ENCODE measurements at regions of chr17 and their contacts with region 1.

Region 1: DNA sequence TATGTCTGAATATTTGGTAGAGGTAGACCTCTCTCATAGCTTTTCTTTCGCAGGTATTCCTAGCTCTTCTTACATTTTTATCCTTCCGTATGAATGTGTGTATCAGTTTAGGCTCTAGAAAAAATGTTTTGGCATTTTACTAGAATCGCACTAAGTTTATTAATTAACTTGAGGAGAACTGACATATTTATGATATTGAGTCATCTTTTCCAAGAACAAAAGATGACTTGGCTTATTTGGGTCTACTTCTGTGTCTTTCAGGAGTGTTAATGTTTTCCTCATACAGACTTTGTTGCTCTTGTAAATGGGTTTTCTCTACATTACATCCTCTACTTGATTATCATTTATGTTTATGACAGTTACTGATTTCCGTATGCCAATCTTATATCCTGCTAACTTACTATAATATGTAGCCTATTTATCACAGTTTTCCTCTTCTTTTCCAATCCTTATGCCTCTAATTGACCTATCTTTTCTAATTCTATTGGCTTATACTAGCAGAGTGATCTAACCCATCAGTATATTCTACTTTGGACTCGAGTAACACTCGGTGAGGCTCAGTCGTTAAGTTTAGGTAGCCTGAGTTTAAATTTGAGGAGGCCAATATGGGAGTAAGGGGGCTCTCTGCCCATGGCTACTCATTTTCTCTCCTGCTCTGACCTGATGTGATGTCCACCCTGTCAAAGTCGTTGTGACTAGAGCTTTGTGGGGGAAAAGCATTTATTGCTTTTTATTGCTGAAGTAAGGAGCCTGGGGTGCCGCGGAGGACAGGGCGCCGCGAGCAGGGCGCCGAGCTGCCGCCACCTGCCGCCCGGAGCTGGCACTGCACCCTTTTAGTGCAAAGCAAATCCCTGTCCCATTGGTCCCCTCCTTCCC is 20.0 kb downstream of the ST6GALNAC1 start:
- H3K4me3 ChIP-seq: peak overlapping the region; percentile 21
- H3K27ac ChIP-seq: no peak overlapping the region
- H3K4me1 ChIP-seq: no peaks in the 10 kb centered on the region
- CTCF ChIP-seq: peak; percentile 82

Region 2: DNA sequence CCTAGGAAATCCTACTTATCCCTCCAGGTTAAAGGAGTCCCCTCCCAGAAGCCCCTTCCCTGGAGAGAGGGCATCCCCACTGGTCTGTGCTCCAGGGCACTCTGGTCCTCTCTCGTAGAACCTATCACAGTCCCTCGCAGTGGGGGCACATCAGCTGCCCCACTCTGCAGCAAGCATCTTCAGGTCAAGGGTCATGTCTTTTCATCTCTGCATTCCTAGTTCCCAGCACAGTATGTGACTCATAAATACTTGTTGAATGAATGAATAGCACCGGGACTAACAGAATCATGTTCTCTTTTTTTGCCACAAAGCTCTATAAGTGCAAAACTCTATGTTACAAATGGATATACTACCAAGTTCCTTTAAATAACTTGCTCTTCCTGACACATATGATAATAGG is 419.2 kb before region 1 on chr17:
- CTCF ChIA-PET with region 1: no interaction called
- POLR2A ChIA-PET with region 1: no interaction called
- H3K4me3 ChIP-seq: no peak overlapping the region
- H3K27ac ChIP-seq: no peak overlapping the region
- H3K4me1 ChIP-seq: no peaks in the 10 kb centered on the region
- CTCF ChIP-seq: no peak

Region 3: DNA sequence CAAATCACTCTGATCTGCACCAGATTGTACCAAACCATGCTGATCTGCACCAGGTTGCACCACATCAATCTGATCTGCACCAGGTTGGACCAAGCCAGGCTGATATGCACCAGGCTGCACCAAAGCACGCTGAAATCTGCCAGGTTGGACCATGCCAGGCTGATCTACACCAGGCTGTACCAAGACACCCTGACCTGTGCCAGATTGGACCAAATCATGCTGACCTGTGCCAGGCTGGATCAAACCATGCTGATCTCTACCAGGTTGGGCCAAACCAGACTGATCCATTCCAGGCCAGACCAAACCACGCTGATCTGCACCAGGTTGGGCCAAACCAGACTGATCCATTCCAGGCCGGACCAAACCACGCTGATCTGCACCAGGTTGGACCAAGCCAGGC is 330.9 kb before region 1 on chr17:
- CTCF ChIA-PET with region 1: no interaction called
- POLR2A ChIA-PET with region 1: no interaction called
- H3K4me3 ChIP-seq: no peak overlapping the region
- H3K27ac ChIP-seq: no peak overlapping the region
- H3K4me1 ChIP-seq: no peaks in the 10 kb centered on the region
- CTCF ChIP-seq: no peak

Region 4: DNA sequence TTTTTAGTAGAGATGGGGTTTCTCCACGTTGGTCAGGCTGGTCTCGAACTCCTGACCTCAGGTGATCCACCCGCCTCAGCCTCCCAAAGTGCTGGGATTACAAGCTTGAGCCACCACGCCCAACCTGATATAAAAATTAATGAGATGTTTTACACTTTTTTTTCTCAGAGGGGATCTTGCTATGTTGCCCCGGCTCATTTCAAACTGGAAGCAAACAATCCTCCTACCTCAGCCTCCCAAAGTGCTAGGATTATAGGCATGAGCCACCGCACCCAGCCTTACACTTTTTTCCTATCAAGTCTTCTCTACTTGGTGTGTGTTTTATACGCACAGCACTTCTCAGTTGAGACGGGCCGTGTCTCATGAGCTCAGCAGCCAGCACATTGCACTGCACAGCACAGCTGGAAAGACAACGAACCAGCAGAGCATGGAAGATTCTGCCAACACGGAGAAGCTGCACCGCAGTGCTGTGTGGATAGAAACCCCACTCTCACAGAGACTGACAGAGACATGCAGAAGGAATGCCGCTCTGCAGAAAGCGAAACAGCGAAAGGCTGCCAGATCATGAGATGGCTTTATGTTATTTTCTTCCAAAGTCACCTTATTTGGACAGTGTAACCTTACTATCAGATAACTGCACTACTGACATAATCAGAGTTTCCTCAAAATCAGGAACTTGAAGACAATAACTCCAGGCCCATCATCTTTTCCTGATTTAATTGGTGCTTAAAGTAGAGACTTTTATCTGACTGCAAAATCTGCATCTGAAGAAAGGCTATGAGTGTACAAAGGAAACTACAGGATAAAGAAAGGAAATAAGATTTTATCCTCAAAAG is 308.9 kb before region 1 on chr17:
- CTCF ChIA-PET with region 1: no interaction called
- POLR2A ChIA-PET with region 1: no interaction called
- H3K4me3 ChIP-seq: no peak overlapping the region
- H3K27ac ChIP-seq: no peak overlapping the region
- H3K4me1 ChIP-seq: no peaks in the 10 kb centered on the region
- CTCF ChIP-seq: no peak

Region 5: DNA sequence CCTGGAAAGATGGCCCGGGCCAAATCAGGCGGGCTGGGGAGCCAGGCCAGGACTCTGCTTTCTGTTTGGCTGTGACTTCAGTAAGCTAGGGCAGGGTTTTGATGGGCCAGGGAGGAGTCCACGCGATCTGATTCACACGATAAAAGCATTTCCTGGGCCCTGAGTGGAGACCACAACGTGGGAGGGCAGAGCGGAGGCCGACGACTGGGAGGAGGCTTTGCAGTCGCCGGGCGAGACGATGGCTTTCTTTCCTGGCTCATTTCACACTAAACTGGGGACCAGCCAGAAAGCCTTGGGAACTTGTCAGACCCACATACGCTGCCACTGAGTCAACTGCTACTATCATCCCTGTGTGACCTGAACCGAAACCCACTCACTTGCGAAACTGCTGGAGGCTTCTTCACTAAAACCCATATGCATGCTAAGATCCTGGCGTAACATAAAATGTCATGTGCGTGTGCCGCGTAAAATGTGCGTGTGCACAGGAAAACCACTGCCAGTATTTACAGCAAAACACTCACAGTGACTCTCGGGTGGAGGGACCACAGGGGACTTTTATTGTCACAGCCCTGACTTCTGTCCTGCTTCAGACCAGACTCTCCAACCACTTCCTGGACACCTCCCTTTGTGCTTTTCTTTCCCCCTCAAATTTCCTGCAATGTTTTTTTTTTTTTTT is 108.1 kb before region 1 on chr17:
- CTCF ChIA-PET with region 1: interaction called, 56 read pairs
- POLR2A ChIA-PET with region 1: interaction called, 4 read pairs
- H3K4me3 ChIP-seq: no peak overlapping the region
- H3K27ac ChIP-seq: no peak overlapping the region
- H3K4me1 ChIP-seq: no peaks in the 10 kb centered on the region
- CTCF ChIP-seq: no peak

Region 6: DNA sequence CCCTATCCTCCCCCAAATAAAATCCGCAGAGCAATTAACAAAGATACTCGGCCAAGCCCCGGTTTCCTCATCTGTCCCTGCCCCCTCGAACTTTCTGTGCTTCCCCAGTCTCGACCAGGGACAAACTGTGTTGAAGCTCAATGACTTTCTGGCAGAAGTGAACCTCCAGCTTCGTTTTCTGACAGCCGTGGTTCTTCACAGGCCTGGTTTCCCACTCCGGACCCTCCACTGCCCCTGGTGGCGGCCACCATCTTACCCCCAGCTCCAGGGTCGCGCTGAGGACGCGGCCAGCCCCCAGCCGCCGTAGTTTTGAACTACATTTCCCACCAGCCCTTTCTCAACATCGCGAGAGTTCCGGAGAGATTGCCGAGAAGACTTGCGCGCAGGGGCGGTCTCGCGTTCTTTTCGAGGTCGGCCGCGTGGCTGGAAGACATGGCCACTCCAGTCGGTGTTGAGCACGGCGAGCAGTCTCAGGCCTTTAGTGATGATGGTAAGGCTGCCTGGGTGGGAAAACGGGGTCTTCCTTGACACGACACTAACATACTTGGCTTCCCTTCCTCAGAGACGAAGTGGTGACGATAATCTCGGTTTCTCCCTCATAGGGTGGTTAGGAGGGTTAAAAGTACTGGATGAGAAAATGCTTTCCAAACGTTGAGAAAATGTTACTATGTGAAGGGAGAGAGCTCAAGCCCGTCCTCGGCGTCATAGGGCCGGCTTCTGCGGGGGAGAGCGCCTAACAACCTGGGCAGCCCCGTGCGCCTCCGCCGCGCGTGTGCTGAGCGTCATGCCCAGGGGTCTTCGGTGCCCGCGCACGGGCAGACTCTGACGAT is 65.9 kb before region 1 on chr17:
- CTCF ChIA-PET with region 1: interaction called, 108 read pairs
- POLR2A ChIA-PET with region 1: interaction called, 19 read pairs
- H3K4me3 ChIP-seq: peak overlapping the region; percentile 93
- H3K27ac ChIP-seq: peak overlapping the region; percentile 82
- H3K4me1 ChIP-seq: peaks cover 20% of the 10 kb centered on the region
- CTCF ChIP-seq: peak; percentile 97

Region 7: GRCh38 chr17:76597728-76598474 is 25.6 kb before region 1 on chr17:
- CTCF ChIA-PET with region 1: interaction called, 19 read pairs
- POLR2A ChIA-PET with region 1: no interaction called
- H3K4me3 ChIP-seq: no peak overlapping the region
- H3K27ac ChIP-seq: no peak overlapping the region
- H3K4me1 ChIP-seq: peaks cover 6% of the 10 kb centered on the region; the same call in 1 of the 2 replicates
- CTCF ChIP-seq: no peak

Region 8: GRCh38 chr17:76641501-76641900 is 18.0 kb after region 1 on chr17:
- CTCF ChIA-PET with region 1: interaction called, 21 read pairs
- POLR2A ChIA-PET with region 1: no interaction called
- H3K4me3 ChIP-seq: no peak overlapping the region
- H3K27ac ChIP-seq: no peak overlapping the region
- H3K4me1 ChIP-seq: peaks cover 16% of the 10 kb centered on the region
- CTCF ChIP-seq: no peak

Region 9: GRCh38 chr17:76681222-76682137 is 58.0 kb after region 1 on chr17:
- CTCF ChIA-PET with region 1: interaction called, 29 read pairs
- POLR2A ChIA-PET with region 1: no interaction called
- H3K4me3 ChIP-seq: no peak overlapping the region
- H3K27ac ChIP-seq: no peak overlapping the region
- H3K4me1 ChIP-seq: no peaks in the 10 kb centered on the region
- CTCF ChIP-seq: peak; percentile 88